Pancreas (tissue), 10 donors: ENCODE measurements at regions of chr19 and their contacts with region 1.

Region 1: GRCh38 chr19:47523473-47523872 is 8.6 kb upstream of the NAPA start:
- DNase-seq: no peak
- ATAC-seq: no peak
- H3K4me3 ChIP-seq: no peak overlapping the region
- H3K27ac ChIP-seq: no peak overlapping the region
- H3K4me1 ChIP-seq: no peaks in the 10 kb centered on the region
- H3K27me3 ChIP-seq: no peaks in the 10 kb centered on the region
- CTCF ChIP-seq: no peak

Region 2: GRCh38 chr19:47598407-47599349 is 75.2 kb after region 1 on chr19:
- intact Hi-C with region 1: loop called in 1 of 3 experiments (anchors 10 kb)
- DNase-seq: no peak
- ATAC-seq: no peak
- H3K4me3 ChIP-seq: no peak overlapping the region
- H3K27ac ChIP-seq: no peak overlapping the region
- H3K4me1 ChIP-seq: peaks cover 0 to 7% (median 3%) of the 10 kb centered on the region in 3 donors
- H3K27me3 ChIP-seq: no peaks in the 10 kb centered on the region
- CTCF ChIP-seq: no peak